Cardiac septum (tissue), 1 donor: ENCODE measurements at regions of chr10 and their contacts with region 1.

Region 1: DNA sequence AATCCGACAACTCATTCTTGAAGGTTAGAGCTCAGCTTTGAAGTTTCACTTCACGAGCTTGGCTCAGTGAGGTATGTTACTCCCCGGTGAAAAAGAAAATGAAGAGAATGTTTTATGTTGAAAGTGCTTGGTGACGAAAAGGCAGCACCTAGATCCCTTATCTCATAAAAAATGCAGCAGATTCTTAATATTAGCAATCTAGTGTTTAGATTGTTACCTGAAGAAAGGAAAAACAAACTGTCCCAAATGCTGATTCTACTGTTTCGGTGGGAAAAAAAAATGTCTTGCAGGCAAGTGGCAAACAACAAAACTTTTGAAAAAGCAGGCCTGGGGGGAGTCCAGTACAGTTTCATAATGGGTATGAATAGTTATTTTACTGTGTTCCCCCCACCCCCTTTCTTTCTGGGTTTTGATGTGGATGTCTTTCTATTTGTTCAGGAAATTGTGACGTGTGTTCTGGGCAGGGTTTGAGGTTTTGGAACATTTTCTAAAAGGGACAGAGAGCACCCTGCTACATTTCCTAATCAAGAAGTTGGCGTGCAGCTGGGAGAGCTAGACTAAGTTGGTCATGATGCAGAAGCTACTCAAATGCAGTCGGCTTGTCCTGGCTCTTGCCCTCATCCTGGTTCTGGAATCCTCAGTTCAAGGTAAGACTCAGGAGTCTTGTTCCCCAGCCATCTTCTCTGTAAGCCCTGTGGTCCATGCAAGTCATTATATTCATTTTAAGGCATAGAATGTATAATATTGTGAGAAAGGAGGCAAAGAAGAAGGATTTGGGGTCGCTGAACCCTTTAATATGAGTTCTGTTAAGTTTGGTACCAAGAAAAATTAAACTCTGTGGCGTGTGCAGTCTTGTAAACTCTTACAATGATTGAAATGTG is at the start of gene SRGN:
- DNase-seq: peak; percentile 89
- total RNA-seq, gene SRGN: 52.1 TPM

Region 2: GRCh38 chr10:69061305-69062161 is 26.3 kb before region 1 on chr10:
- intact Hi-C with region 1: loop called (anchors 2 kb)
- DNase-seq: peak; percentile 84